OCI-LY7 (cell line): ENCODE measurements at regions of chr4 and their contacts with region 1.

Region 1: DNA sequence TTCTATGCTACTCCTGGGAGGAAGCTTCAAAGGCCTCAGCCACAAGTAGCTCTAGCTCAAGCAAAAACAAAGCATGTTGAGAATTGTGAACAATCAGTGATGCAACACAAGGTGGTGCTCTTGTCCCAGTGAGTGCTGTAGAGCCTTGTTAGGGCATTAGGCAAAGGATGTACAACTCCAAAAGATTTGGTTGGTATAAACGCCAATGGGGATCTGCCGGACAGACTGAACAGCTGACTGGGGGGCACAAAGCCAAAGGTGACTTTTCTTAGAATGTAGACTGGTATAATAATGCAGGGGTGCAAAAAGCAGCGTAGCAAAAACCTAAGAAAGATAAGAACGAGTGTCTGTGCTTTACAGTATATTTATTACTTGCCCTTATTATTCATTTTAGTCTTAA is 62.6 kb upstream of the ALB start:
- DNase-seq: peak; percentile 60
- H3K4me3 ChIP-seq: no peak overlapping the region
- H3K27ac ChIP-seq: no peak overlapping the region
- H3K4me1 ChIP-seq: no peaks in the 10 kb centered on the region
- CTCF ChIP-seq: peak; percentile 78

Region 2: DNA sequence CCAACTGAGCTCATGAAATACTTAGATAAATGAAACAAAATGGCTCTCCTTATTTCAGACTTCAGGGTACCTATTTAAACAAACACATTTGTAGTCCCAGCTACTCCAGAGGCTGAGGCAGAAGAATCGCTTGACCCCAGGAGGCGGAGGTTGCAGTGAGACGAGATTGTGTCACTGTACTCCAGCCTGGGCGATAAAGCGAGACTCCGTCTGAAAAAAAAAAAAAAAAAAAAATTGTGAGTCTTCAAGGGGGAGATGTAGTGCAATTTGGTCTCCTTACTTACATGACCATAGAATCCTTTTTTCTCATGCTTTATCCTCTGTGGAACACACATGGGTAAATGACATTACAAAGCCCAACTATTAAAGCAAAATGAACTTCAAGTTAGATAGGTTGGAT is 770.1 kb before region 1 on chr4:
- CTCF ChIA-PET with region 1: no interaction called
- POLR2A ChIA-PET with region 1: interaction called, 12 read pairs
- intact Hi-C with region 1: no loop called
- DNase-seq: no peak
- H3K4me3 ChIP-seq: no peak overlapping the region
- H3K27ac ChIP-seq: no peak overlapping the region
- H3K4me1 ChIP-seq: no peaks in the 10 kb centered on the region
- CTCF ChIP-seq: no peak

Region 3: GRCh38 chr4:73573794-73574406 is 232.4 kb after region 1 on chr4:
- CTCF ChIA-PET with region 1: no interaction called
- POLR2A ChIA-PET with region 1: no interaction called
- intact Hi-C with region 1: loop called (anchors 2 kb)
- DNase-seq: peak; percentile 86
- H3K4me3 ChIP-seq: no peak overlapping the region
- H3K27ac ChIP-seq: peak overlapping the region; percentile 54
- H3K4me1 ChIP-seq: peaks cover 20% of the 10 kb centered on the region
- CTCF ChIP-seq: peak; percentile 99

Region 4: GRCh38 chr4:73668782-73669201 is 327.3 kb after region 1 on chr4:
- CTCF ChIA-PET with region 1: no interaction called
- POLR2A ChIA-PET with region 1: no interaction called
- intact Hi-C with region 1: loop called (anchors 1 kb)
- DNase-seq: no peak
- H3K4me3 ChIP-seq: no peak overlapping the region
- H3K27ac ChIP-seq: no peak overlapping the region
- H3K4me1 ChIP-seq: no peaks in the 10 kb centered on the region
- CTCF ChIP-seq: no peak

Region 5: GRCh38 chr4:73776321-73776729 is 434.9 kb after region 1 on chr4:
- CTCF ChIA-PET with region 1: no interaction called
- POLR2A ChIA-PET with region 1: no interaction called
- intact Hi-C with region 1: no loop called
- DNase-seq: no peak
- H3K4me3 ChIP-seq: no peak overlapping the region
- H3K27ac ChIP-seq: no peak overlapping the region
- H3K4me1 ChIP-seq: no peaks in the 10 kb centered on the region
- CTCF ChIP-seq: no peak